CD4-positive, alpha-beta T cell (primary cell): ENCODE measurements at regions of chr19 and their contacts with region 1.

Region 1: GRCh38 chr19:1863726-1864480 is 524 bp upstream of the KLF16 start:
- DNase-seq: peak; percentile 83 to 97 (median 92)
- ATAC-seq: peak; percentile 66
- H3K4me3 ChIP-seq: peak overlapping the region; percentile 83
- H3K4me3 Mint-ChIP-seq: peak overlapping the region; percentile 90
- H3K27ac ChIP-seq: peak overlapping the region; percentile 67 to 89
- H3K27ac Mint-ChIP-seq: peak overlapping the region; percentile 63
- H3K4me1 ChIP-seq: peaks cover 47% of the 10 kb centered on the region
- H3K4me1 Mint-ChIP-seq: peaks cover 41% of the 10 kb centered on the region
- H3K27me3 ChIP-seq: no peaks in the 10 kb centered on the region
- H3K27me3 Mint-ChIP-seq: no peaks in the 10 kb centered on the region
- CTCF ChIP-seq: no peak

Region 2: DNA sequence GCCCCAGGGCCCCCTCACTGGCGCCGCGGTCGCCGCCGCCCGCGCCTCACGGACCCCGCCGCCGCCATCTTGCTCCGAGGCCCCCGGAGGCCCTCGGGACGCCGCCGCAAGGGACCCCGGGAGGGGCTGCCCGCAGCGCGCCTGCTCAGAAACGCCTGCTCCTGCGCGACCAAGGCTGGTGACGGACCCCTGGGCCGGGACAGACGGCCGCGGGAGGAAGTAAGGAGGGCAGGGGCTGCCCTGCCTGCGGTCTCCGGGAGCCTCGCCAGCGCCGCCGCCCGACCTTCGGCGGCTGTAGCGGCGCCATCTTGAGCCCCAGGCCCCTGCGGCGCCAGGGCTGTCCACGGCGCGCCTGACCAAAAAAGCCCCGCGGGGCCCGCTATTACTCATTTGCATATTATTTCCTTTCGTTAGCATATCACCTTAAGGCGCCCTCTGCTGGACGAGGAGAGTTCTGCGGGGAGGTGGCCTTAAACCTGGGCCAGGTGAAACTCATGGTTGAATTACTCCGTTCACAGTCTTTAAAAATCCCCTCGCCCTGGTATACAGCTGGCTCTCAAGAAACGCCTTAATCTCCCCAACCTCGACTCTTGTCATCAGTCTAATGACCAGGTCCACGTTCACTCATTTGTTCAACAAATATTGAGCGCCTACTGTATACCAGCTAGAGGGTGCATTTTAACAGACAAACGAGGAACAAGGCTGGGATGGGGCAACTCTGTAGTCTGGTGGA is 15.3 kb before region 1 on chr19 and contains the start of gene REXO1:
- CTCF ChIA-PET with region 1: no interaction called
- POLR2A ChIA-PET with region 1: no interaction called
- intact Hi-C with region 1: loop called in 1 of 2 experiments (anchors 2 kb)
- DNase-seq: peak; percentile 96 to 99 (median 98)
- ATAC-seq: peak; percentile 72
- H3K4me3 ChIP-seq: peak within 1 kb of the TSS; percentile 96
- H3K4me3 Mint-ChIP-seq: peak within 1 kb of the TSS; percentile 93
- H3K27ac ChIP-seq: peak within 1 kb of the TSS; percentile 87 to 98
- H3K27ac Mint-ChIP-seq: peak within 1 kb of the TSS; percentile 93
- H3K4me1 ChIP-seq: peaks cover 75% of the 10 kb centered on the region
- H3K4me1 Mint-ChIP-seq: peaks cover 61% of the 10 kb centered on the region
- H3K27me3 ChIP-seq: no peaks in the 10 kb centered on the region
- H3K27me3 Mint-ChIP-seq: no peaks in the 10 kb centered on the region
- CTCF ChIP-seq: peak; percentile 90
- total RNA-seq, gene REXO1: 106 to 114 TPM

Region 3: DNA sequence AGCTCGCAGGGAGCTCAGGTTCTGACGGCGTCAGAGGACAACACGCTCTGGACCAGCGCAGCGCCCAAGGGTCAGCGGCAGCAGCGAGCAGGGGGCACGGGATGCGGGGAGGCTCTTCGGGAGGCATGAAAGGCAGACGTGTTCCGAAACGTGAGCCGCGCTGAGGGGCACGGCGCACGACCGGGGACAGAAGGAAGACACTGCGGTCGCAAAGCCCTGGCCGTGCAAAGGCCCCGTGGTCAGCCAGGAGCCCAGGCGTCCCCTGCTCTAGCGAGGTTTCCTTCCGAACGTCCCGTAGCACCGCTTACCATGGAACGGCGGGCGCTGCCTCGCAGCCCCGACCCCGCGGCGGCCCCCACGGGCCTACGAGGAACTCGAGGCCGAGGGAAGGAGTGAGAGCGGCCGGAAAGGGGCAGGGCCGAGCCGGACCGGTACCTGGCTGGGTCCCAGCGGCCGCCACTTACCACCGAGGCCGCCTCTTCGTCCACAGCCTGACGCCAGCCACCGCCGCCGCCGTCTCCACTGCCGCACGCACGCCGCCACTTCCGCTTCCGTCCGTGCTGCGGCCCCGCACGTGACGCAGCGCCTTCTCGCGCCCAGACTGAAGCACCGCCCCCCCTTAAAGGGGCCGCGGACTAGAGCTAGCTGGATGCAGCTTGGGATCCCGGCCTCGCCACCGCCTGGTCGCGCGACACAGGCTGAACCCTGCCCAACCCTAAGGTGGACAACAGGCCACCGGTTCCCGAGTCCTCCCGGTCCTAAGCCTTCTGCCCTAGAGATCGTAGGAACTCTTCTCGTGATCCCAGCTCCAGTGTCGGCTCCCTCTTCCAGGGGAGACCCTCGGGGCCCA is 12.0 kb after region 1 on chr19:
- CTCF ChIA-PET with region 1: interaction called, 23 read pairs
- POLR2A ChIA-PET with region 1: interaction called, 41 read pairs
- intact Hi-C with region 1: loop called in 1 of 2 experiments (anchors 1 kb)
- DNase-seq: peak; percentile 74 to 95 (median 83)
- ATAC-seq: peak; percentile 83
- H3K4me3 ChIP-seq: peak overlapping the region; percentile 98
- H3K4me3 Mint-ChIP-seq: peak overlapping the region; percentile 91
- H3K27ac ChIP-seq: peak overlapping the region; percentile 90 to 93
- H3K27ac Mint-ChIP-seq: peak overlapping the region; percentile 91
- H3K4me1 ChIP-seq: peaks cover 47% of the 10 kb centered on the region
- H3K4me1 Mint-ChIP-seq: peaks cover 20% of the 10 kb centered on the region
- H3K27me3 ChIP-seq: no peaks in the 10 kb centered on the region
- H3K27me3 Mint-ChIP-seq: no peaks in the 10 kb centered on the region
- CTCF ChIP-seq: no peak

Region 4: GRCh38 chr19:1905071-1905862 is 41.4 kb after region 1 on chr19 and contains the starts of genes ADAT3 and SCAMP4:
- CTCF ChIA-PET with region 1: interaction called, 5 read pairs
- POLR2A ChIA-PET with region 1: interaction called, 5 read pairs
- intact Hi-C with region 1: loop called (anchors 1 to 5 kb)
- DNase-seq: peak; percentile 97 to 99 (median 99)
- ATAC-seq: peak; percentile 98
- H3K4me3 ChIP-seq: peak within 1 kb of the TSS; percentile 65
- H3K4me3 Mint-ChIP-seq: peak within 1 kb of the TSS; percentile 93
- H3K27ac ChIP-seq: peak within 1 kb of the TSS; percentile 72
- H3K27ac Mint-ChIP-seq: peak within 1 kb of the TSS; percentile 78
- H3K4me1 ChIP-seq: peaks cover 51% of the 10 kb centered on the region
- H3K4me1 Mint-ChIP-seq: peaks cover 40% of the 10 kb centered on the region
- H3K27me3 ChIP-seq: no peaks in the 10 kb centered on the region
- H3K27me3 Mint-ChIP-seq: no peaks in the 10 kb centered on the region
- CTCF ChIP-seq: no peak
- total RNA-seq, gene ADAT3: 7.9 to 8.2 TPM
- total RNA-seq, gene SCAMP4: 12.7 to 15.4 TPM

Region 5: DNA sequence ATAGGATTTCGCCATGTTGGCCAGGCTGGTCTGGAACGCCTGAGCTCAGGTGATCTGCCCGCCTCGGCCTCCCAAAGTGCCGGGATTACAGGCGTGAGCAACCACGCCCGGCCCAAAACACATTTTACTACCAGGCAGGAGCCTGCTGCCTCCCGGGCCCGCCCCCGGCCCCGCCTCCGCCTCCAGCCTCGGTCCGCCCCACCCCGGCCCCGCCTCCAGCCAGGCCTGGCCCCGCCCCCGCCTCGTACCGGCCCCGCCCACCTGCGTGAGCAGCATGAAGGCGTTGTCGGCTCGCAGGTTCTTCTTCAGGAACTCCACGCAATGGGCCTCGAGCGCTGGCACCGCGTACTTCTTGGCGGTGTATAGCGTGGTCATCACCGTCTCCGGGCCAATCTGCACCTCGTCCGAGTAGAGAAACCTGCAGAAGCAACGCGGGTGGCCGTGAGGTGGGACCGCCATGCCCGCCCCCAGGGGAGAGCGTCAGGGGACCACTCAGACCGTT is 128.9 kb after region 1 on chr19:
- CTCF ChIA-PET with region 1: no interaction called
- POLR2A ChIA-PET with region 1: no interaction called
- intact Hi-C with region 1: no loop called
- DNase-seq: peak in 3 of 14 experiments; percentile 10 to 60 (median 58)
- ATAC-seq: no peak
- H3K4me3 ChIP-seq: no peak overlapping the region
- H3K4me3 Mint-ChIP-seq: no peak overlapping the region
- H3K27ac ChIP-seq: peak overlapping the region in 1 of 2 donors; percentile 21
- H3K27ac Mint-ChIP-seq: no peak overlapping the region
- H3K4me1 ChIP-seq: no peaks in the 10 kb centered on the region
- H3K4me1 Mint-ChIP-seq: peaks cover 4% of the 10 kb centered on the region
- H3K27me3 ChIP-seq: no peaks in the 10 kb centered on the region
- H3K27me3 Mint-ChIP-seq: no peaks in the 10 kb centered on the region
- CTCF ChIP-seq: no peak